ENCODE measurements at regions of chr17 and their contacts with region 1.

Region 1: GRCh38 chr17:55601874-55602364 is 90.7 kb upstream of the SMIM36 start:
- DNase-seq: peak; percentile 61
- ATAC-seq: peak; percentile 90
- H3K4me3 ChIP-seq: no peak overlapping the region
- H3K27ac ChIP-seq: peak overlapping the region; percentile 47; the same call in 1 of the 2 replicates
- H3K4me1 ChIP-seq: peaks cover 3% of the 10 kb centered on the region; the same call in 1 of the 2 replicates
- H3K27me3 ChIP-seq: peaks cover 3% of the 10 kb centered on the region; the same call in 1 of the 2 replicates
- CTCF ChIP-seq: peak; percentile 79
- POLR2A ChIP-seq: no peak
- RAD21 ChIP-seq: peak; percentile 82

Region 2: GRCh38 chr17:55533608-55534007 is 68.3 kb before region 1 on chr17:
- CTCF ChIA-PET with region 1: interaction called, 16 read pairs
- POLR2A ChIA-PET with region 1: no interaction called
- dilution Hi-C with region 1: no loop called
- in situ Hi-C with region 1: loop called (anchors 5 kb)
- intact Hi-C with region 1: no loop called
- DNase-seq: peak; percentile 17
- ATAC-seq: no peak
- H3K4me3 ChIP-seq: no peak overlapping the region
- H3K27ac ChIP-seq: no peak overlapping the region
- H3K4me1 ChIP-seq: peaks cover 2% of the 10 kb centered on the region; the same call in 1 of the 2 replicates
- H3K27me3 ChIP-seq: no peaks in the 10 kb centered on the region; the same call in 1 of the 2 replicates
- CTCF ChIP-seq: no peak
- POLR2A ChIP-seq: no peak
- RAD21 ChIP-seq: no peak

Region 3: GRCh38 chr17:55641676-55642081 is 39.8 kb after region 1 on chr17:
- CTCF ChIA-PET with region 1: interaction called, 3 read pairs
- POLR2A ChIA-PET with region 1: no interaction called
- dilution Hi-C with region 1: no loop called
- in situ Hi-C with region 1: no loop called
- intact Hi-C with region 1: loop called (anchors 1 kb)
- DNase-seq: peak; percentile 63
- ATAC-seq: peak; percentile 94
- H3K4me3 ChIP-seq: no peak overlapping the region
- H3K27ac ChIP-seq: no peak overlapping the region
- H3K4me1 ChIP-seq: no peaks in the 10 kb centered on the region
- H3K27me3 ChIP-seq: peaks cover 4% of the 10 kb centered on the region
- CTCF ChIP-seq: peak; percentile 54
- POLR2A ChIP-seq: no peak
- RAD21 ChIP-seq: peak; percentile 46

Region 4: DNA sequence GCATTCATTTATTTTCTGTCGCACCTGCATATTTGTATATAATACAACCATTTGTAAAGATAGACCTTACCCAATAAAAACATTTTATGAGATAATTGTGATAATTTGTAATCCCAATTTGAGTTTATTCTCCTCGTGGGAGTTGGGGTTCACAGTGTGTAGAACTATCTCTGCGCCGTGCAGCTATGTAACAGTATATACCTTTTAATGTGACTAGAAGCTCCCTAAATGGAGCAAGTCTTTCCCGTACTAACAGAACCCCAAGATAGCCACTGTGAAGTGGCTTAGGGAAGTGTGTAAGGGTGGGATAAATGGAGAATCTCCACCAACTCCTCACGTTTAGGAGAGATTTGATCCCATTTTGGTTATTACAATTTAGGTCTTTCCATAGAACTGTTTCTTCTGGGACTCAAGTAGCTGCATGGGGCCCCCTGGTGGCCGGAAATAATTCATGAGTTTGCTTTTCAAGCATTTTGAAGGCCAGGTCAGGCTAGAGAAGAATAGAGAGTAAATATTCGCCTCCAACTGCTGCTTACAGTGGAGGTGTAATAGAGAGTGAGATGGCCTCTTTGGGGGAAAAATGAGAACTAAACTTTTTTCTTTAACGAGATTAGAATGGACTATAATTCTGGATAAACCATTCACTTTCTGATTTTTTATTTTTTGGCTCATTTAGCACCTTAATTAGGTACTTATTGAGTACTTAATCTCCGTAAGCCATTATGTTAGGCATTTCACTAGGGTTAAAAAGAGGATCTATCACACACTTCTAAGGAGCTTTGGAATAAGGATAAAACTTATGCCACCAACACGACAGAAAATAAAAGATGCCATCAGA is 116.2 kb after region 1 on chr17:
- CTCF ChIA-PET with region 1: interaction called, 6 read pairs
- POLR2A ChIA-PET with region 1: no interaction called
- dilution Hi-C with region 1: no loop called
- in situ Hi-C with region 1: no loop called
- intact Hi-C with region 1: loop called (anchors 2 kb)
- DNase-seq: peak; percentile 68
- ATAC-seq: peak; percentile 77
- H3K4me3 ChIP-seq: no peak overlapping the region
- H3K27ac ChIP-seq: no peak overlapping the region
- H3K4me1 ChIP-seq: peaks cover 2% of the 10 kb centered on the region
- H3K27me3 ChIP-seq: peaks cover 5% of the 10 kb centered on the region; the same call in 1 of the 2 replicates
- CTCF ChIP-seq: peak; percentile 75
- POLR2A ChIP-seq: no peak
- RAD21 ChIP-seq: peak; percentile 55

Region 5: GRCh38 chr17:55750750-55751657 is 149.1 kb after region 1 on chr17 and contains the start of gene PCTP:
- CTCF ChIA-PET with region 1: no interaction called
- POLR2A ChIA-PET with region 1: no interaction called
- dilution Hi-C with region 1: no loop called
- in situ Hi-C with region 1: no loop called
- intact Hi-C with region 1: no loop called
- DNase-seq: peak; percentile 87
- ATAC-seq: peak; percentile 100
- H3K4me3 ChIP-seq: peak within 1 kb of the TSS; percentile 87
- H3K27ac ChIP-seq: peak within 1 kb of the TSS; percentile 71
- H3K4me1 ChIP-seq: peaks cover 2% of the 10 kb centered on the region; the same call in 1 of the 2 replicates
- H3K27me3 ChIP-seq: no peaks in the 10 kb centered on the region
- CTCF ChIP-seq: peak; percentile 46
- POLR2A ChIP-seq: peak; percentile 78
- RAD21 ChIP-seq: peak; percentile 33
- total RNA-seq, gene PCTP: 12.9 and 18.1 TPM in 2 replicates

Region 6: GRCh38 chr17:55770148-55770870 is 168.4 kb after region 1 on chr17:
- CTCF ChIA-PET with region 1: interaction called, 5 read pairs
- POLR2A ChIA-PET with region 1: no interaction called
- dilution Hi-C with region 1: no loop called
- in situ Hi-C with region 1: no loop called
- intact Hi-C with region 1: loop called (anchors 1 kb)
- DNase-seq: peak; percentile 72
- ATAC-seq: peak; percentile 63
- H3K4me3 ChIP-seq: no peak overlapping the region
- H3K27ac ChIP-seq: no peak overlapping the region
- H3K4me1 ChIP-seq: peaks cover 8% of the 10 kb centered on the region
- H3K27me3 ChIP-seq: no peaks in the 10 kb centered on the region
- CTCF ChIP-seq: peak; percentile 69
- POLR2A ChIP-seq: no peak
- RAD21 ChIP-seq: peak; percentile 73

Measured in IMR-90 (cell line).